ENCODE measurements at regions of chr17 and their contacts with region 1.

Region 1: DNA sequence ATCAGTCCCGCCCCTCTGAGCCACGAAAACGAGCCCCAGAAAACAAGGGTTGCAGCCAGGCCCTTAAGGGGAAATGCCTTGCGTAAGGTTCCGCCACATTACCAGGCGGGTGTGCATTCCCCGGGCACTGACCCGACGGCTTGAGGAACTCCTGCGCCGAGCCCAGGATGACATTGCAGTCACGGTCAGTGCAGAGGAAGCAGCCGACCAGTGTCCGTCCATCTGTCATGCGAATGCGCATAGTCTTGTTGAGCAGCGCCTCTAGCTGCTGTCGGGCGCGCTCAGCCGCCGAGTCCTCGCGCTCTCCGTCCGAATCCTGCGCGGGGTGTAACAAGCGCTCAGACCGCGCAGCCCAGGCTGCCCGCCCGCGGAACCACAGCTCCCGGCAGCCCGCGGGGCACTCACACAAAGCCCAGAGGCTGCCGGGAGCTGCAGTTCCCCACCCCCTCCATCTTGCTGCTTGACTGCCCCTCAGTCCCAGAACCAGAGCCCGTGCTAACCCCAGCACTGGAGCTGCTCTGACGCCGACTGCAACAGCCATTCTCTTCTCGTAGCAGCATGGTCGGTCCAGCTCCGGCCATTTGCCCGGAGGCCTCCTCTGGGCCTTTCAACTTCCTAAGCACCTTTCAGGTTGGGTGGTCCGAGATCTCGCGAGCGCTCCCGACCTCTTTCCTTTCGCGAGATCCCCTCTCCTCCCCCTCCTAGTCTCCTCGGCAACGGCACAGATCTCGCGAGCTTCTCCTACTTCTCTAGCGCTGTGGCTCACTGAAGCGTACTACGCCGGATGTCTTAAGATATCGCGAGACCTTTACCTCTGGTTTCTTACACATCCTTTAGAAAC is at the start of gene NAA38:
- DNase-seq: peak; percentile 98
- ATAC-seq: peak; percentile 90
- H3K4me3 Mint-ChIP-seq: no peak within 1 kb of the TSS
- H3K27ac Mint-ChIP-seq: no peak within 1 kb of the TSS
- H3K4me1 Mint-ChIP-seq: peaks cover 33% of the 10 kb centered on the region
- H3K27me3 Mint-ChIP-seq: no peaks in the 10 kb centered on the region
- CTCF ChIP-seq: no peak
- total RNA-seq, gene NAA38: 72.8 to 77.2 TPM

Region 2: GRCh38 chr17:7720125-7720524 is 137.0 kb before region 1 on chr17:
- CTCF ChIA-PET with region 1: no interaction called
- POLR2A ChIA-PET with region 1: no interaction called
- intact Hi-C with region 1: no loop called
- DNase-seq: no peak
- ATAC-seq: no peak
- H3K4me3 Mint-ChIP-seq: no peak overlapping the region
- H3K27ac Mint-ChIP-seq: no peak overlapping the region
- H3K4me1 Mint-ChIP-seq: peaks cover 9% of the 10 kb centered on the region
- H3K27me3 Mint-ChIP-seq: peaks cover 50% of the 10 kb centered on the region
- CTCF ChIP-seq: no peak

Region 3: GRCh38 chr17:7834962-7835813 is 21.9 kb before region 1 on chr17:
- CTCF ChIA-PET with region 1: interaction called, 9 read pairs
- POLR2A ChIA-PET with region 1: interaction called, 74 read pairs
- intact Hi-C with region 1: no loop called
- DNase-seq: peak; percentile 94
- ATAC-seq: peak; percentile 50
- H3K4me3 Mint-ChIP-seq: peak overlapping the region; percentile 83
- H3K27ac Mint-ChIP-seq: peak overlapping the region; percentile 91
- H3K4me1 Mint-ChIP-seq: peaks cover 41% of the 10 kb centered on the region
- H3K27me3 Mint-ChIP-seq: no peaks in the 10 kb centered on the region
- CTCF ChIP-seq: peak; percentile 84

Region 4: GRCh38 chr17:7844292-7845154 is 12.6 kb before region 1 on chr17:
- CTCF ChIA-PET with region 1: interaction called, 8 read pairs
- POLR2A ChIA-PET with region 1: interaction called, 42 read pairs
- intact Hi-C with region 1: loop called (anchors 2 kb)
- DNase-seq: peak; percentile 91
- ATAC-seq: peak; percentile 45
- H3K4me3 Mint-ChIP-seq: peak overlapping the region; percentile 83
- H3K27ac Mint-ChIP-seq: peak overlapping the region; percentile 98
- H3K4me1 Mint-ChIP-seq: peaks cover 45% of the 10 kb centered on the region
- H3K27me3 Mint-ChIP-seq: no peaks in the 10 kb centered on the region
- CTCF ChIP-seq: no peak

Measured in activated CD8-positive, alpha-beta T cell treated with anti-CD3 and anti-CD28 coated beads for 36 hours (primary cell).